Ascending aorta (tissue), 2 donors: ENCODE measurements at regions of chr2 and their contacts with region 1.

Region 1: GRCh38 chr2:156341452-156342253 is 9.1 kb upstream of the NR4A2 start:
- DNase-seq: peak; percentile 76 to 96
- H3K4me3 ChIP-seq: peak overlapping the region; percentile 94 to 97
- H3K27ac ChIP-seq: peak overlapping the region; percentile 100
- H3K4me1 ChIP-seq: peaks cover 0 to 11% of the 10 kb centered on the region in 2 donors
- H3K27me3 ChIP-seq: no peaks in the 10 kb centered on the region
- CTCF ChIP-seq: no peak

Region 2: GRCh38 chr2:155944218-155944617 is 397.4 kb before region 1 on chr2:
- intact Hi-C with region 1: no loop called
- DNase-seq: no peak
- H3K4me3 ChIP-seq: no peak overlapping the region
- H3K27ac ChIP-seq: no peak overlapping the region
- H3K4me1 ChIP-seq: no peaks in the 10 kb centered on the region
- H3K27me3 ChIP-seq: no peaks in the 10 kb centered on the region
- CTCF ChIP-seq: no peak

Region 3: GRCh38 chr2:156219491-156220100 is 122.1 kb before region 1 on chr2:
- intact Hi-C with region 1: no loop called
- DNase-seq: no peak
- H3K4me3 ChIP-seq: no peak overlapping the region
- H3K27ac ChIP-seq: no peak overlapping the region
- H3K4me1 ChIP-seq: no peaks in the 10 kb centered on the region
- H3K27me3 ChIP-seq: no peaks in the 10 kb centered on the region
- CTCF ChIP-seq: no peak

Region 4: DNA sequence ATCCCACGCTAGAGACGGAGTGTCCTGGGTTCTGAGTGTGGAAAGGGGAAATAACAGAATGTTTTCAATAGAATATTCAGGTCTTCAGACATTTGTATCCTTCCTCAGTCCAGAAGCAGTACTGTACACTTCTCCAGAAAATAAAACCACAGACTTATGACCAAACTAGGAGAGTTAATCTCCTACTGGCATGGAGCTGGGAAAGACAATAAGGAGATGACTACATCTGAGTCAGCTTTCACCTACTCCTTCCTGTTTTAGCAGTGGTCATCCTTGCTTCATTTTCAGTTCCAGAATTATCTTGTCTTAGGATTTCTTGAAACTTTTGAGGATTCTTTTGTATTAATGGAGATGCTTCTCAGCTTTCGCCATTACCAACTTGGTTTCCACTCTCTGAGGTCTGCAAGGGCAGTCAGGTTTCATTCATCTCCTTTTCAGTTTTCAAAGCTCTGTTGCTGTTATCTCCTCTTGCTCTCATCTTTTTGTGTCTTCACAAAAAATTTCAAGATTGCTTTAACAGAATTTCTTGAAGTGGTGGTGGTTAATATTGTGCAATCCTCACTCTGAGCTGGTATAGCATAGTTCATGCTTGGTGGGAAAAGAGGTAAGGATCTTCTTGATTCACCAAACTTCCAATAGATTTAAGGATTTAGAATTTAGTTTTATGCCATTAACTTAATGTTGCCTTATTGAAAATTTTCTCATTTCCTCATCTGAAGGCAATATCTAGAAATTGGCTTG is 14.5 kb after region 1 on chr2:
- intact Hi-C with region 1: no loop called
- DNase-seq: no peak
- H3K4me3 ChIP-seq: no peak overlapping the region
- H3K27ac ChIP-seq: no peak overlapping the region
- H3K4me1 ChIP-seq: no peaks in the 10 kb centered on the region
- H3K27me3 ChIP-seq: no peaks in the 10 kb centered on the region
- CTCF ChIP-seq: no peak

Region 5: GRCh38 chr2:156400706-156401678 is 59.3 kb after region 1 on chr2:
- intact Hi-C with region 1: loop called (anchors 1 kb)
- DNase-seq: peak in 1 of 2 donors; percentile 88
- H3K4me3 ChIP-seq: peak overlapping the region; percentile 56 to 96
- H3K27ac ChIP-seq: peak overlapping the region; percentile 87 to 99
- H3K4me1 ChIP-seq: peaks cover 0 to 4% of the 10 kb centered on the region in 2 donors
- H3K27me3 ChIP-seq: no peaks in the 10 kb centered on the region
- CTCF ChIP-seq: no peak

Region 6: DNA sequence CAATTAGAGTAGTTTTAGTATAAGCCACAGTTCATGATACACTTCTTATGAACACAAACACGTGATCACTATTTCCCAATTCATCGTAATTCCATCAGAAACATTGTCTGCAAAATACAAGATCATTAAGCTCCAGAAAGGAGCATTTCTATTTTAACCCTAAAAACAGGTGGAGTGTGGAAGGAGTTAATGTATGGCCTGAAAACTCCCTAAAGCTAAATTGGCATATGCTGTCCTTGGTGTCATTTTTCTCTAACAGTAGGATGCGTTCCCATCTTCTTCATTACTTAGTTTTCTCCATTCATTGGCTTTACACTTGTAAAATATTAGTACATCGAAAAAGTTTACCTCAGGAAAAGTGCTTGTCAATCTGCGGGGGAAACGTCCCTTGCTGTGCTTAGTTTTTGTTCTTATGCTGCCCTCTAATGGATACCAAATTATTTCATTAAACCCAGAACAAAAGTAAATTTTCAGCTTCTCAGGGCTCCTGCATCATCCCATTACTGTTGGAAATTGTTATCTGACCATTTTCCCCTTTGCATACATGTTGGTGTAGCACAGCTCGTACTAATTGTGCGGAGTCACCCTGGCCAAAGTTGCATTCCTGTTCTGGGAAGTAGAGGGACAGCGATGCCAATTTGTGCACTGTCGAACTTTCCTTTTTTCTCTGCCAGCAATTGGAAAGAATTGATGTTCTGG is 247.9 kb after region 1 on chr2:
- intact Hi-C with region 1: loop called (anchors 5 kb)
- DNase-seq: no peak
- H3K4me3 ChIP-seq: no peak overlapping the region
- H3K27ac ChIP-seq: no peak overlapping the region
- H3K4me1 ChIP-seq: no peaks in the 10 kb centered on the region
- H3K27me3 ChIP-seq: no peaks in the 10 kb centered on the region
- CTCF ChIP-seq: peak; percentile 21 to 66 (median 36)

Region 7: GRCh38 chr2:156803248-156803647 is 461.6 kb after region 1 on chr2:
- intact Hi-C with region 1: no loop called
- DNase-seq: no peak
- H3K4me3 ChIP-seq: no peak overlapping the region
- H3K27ac ChIP-seq: no peak overlapping the region
- H3K4me1 ChIP-seq: no peaks in the 10 kb centered on the region
- H3K27me3 ChIP-seq: no peaks in the 10 kb centered on the region
- CTCF ChIP-seq: no peak

Region 8: GRCh38 chr2:157173740-157174184 is 832.1 kb after region 1 on chr2:
- intact Hi-C with region 1: loop called (anchors 5 kb)
- DNase-seq: peak in 1 of 2 donors; percentile 74
- H3K4me3 ChIP-seq: peak overlapping the region; percentile 1 to 27
- H3K27ac ChIP-seq: peak overlapping the region; percentile 32 to 66
- H3K4me1 ChIP-seq: peaks cover 0 to 6% of the 10 kb centered on the region in 2 donors
- H3K27me3 ChIP-seq: no peaks in the 10 kb centered on the region
- CTCF ChIP-seq: no peak